ENCODE measurements at regions of chr22 and their contacts with region 1.

Region 1: DNA sequence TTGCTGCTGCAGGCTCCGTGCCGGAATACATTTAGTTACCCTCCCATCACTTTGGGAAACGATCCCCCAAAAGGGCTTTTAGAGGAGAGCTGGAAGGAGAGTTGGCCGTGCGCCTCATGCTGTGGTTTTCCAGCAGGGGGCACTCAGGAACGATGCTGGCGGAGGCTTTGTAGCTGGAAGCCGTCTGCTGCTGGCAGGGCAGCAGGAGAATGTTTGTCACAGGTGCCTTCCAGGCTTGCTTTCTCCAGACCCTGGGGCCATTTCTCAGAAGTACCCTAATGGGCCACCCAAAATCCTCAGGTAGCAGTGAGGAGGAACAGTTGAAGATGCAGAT is 30.0 kb upstream of the CABP7 start:
- DNase-seq: peak; percentile 16
- H3K4me3 ChIP-seq: no peak overlapping the region
- H3K27ac ChIP-seq: no peak overlapping the region
- H3K27me3 ChIP-seq: no peaks in the 10 kb centered on the region
- CTCF ChIP-seq: peak; percentile 90

Region 2: DNA sequence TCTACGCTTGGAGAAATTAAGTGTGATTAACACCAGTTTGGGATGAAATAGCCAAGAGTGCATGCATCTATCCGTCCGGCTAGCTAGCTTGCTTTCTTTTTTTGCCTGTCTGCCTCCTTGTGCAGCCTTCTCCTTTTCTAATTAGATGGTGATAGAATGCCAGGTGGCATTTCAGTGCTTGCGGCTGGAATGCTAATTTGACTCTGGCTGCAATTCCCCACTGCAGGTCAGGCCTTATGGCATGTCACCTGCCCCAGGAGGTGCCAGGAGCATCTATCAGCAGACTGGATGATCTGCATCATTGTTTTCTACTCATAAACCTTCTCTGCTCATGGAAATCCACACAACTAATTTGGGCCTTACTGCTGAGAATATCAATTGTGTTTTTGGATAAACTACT is 21.2 kb before region 1 on chr22:
- CTCF ChIA-PET with region 1: interaction called, 17 read pairs
- POLR2A ChIA-PET with region 1: no interaction called
- DNase-seq: no peak
- H3K4me3 ChIP-seq: no peak overlapping the region
- H3K27ac ChIP-seq: no peak overlapping the region
- H3K27me3 ChIP-seq: no peaks in the 10 kb centered on the region
- CTCF ChIP-seq: no peak

Region 3: GRCh38 chr22:29701155-29701999 is 11.5 kb after region 1 on chr22:
- CTCF ChIA-PET with region 1: interaction called, 11 read pairs
- POLR2A ChIA-PET with region 1: interaction called, 3 read pairs
- DNase-seq: no peak
- H3K4me3 ChIP-seq: no peak overlapping the region
- H3K27ac ChIP-seq: no peak overlapping the region
- H3K27me3 ChIP-seq: peaks cover 4% of the 10 kb centered on the region
- CTCF ChIP-seq: peak; percentile 25